Right lobe of liver (tissue), 6 donors: ENCODE measurements at regions of chr2 and their contacts with region 1.

Region 1: DNA sequence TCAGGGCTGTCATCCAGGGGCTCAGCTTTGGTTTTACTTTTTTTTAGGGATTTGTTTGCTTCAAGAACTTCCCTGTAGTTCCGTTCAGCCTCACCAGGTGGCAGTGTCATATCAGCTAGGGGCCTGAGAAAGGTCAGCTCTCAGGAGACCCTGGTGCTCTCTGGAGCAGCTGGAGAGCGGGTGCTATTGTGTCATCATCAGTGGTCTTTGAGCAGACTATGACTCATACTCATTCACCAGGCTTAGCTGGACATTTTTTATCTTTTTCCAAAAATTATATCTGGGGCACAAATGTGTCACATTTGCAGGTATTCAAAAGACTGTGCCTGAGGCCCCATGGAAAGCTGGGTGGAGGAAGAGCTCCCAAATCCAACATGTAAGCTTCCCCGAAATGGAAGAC is 24.4 kb downstream of the ZNF892 start:
- DNase-seq: peak; percentile 53 to 70 (median 60)
- ATAC-seq: peak; percentile 69 to 94 (median 86)
- H3K4me3 ChIP-seq: no peak overlapping the region
- H3K27ac ChIP-seq: no peak overlapping the region
- H3K4me1 ChIP-seq: no peaks in the 10 kb centered on the region
- H3K27me3 ChIP-seq: no peaks in the 10 kb centered on the region
- CTCF ChIP-seq: peak; percentile 78 to 88 (median 83)
- POLR2A ChIP-seq: no peak

Region 2: DNA sequence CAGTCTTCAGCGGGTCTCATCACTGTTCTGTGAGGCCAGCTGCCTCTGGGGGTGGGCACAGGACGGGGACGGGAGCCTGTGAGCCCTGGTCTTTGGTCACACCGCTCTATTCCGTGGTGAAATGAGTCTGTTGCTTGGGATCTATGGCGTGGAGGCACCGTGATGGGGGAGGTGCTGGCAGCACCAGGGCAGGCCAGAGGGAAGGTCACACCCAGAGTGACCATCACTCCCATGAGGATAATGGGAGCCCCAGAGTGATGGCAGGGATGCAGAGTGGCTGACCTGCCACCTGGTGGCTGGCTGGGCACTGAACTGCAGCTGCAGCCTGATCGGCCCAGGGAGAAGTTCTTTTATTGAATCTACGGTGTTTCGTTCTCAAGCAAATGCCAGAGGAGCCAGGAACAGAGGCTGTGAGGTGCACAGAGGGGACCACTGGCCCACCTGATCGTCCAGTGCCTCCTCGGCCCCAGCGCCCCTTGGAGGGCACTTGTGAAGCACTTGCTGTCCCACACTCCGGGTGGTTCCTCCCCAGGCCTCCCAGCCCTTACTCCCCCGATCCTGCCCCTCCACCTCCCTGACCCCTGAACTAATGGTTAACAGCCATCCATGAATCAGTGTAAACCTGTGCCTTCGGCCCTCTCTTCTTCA is 83.4 kb after region 1 on chr2:
- intact Hi-C with region 1: loop called (anchors 5 kb)
- DNase-seq: peak; percentile 59 to 69 (median 62)
- ATAC-seq: peak; percentile 83 to 94 (median 88)
- H3K4me3 ChIP-seq: no peak overlapping the region
- H3K27ac ChIP-seq: no peak overlapping the region
- H3K4me1 ChIP-seq: no peaks in the 10 kb centered on the region
- H3K27me3 ChIP-seq: no peaks in the 10 kb centered on the region
- CTCF ChIP-seq: peak; percentile 63 to 89 (median 85)
- POLR2A ChIP-seq: no peak

Region 3: DNA sequence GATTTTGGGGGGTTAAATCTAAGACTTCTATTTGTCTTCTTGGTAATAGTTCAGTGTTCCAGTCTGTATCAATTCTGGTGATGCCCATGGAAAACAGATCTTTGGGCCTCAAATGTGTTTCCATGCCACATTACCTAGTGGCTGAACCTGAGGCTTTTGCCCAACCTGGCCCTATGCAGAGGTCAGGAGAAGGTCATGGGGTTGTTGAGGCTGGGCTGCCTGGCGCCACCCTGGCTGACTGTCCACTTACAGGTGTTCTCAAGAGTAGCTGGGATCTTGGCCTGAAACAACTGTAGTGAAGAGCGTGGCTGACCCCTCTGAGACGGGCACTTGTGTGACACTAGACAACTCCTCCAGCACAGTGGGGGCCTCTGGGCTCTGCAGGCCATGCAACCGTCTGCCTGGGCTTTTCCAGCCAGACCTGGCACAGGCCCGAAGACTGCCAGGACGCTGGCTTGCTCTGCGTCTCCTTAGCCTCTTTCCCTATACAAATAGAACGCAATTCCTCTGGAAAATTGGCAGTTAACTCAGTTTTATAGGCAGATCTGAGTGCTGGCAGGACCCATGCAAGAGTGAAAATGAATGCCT is 487.8 kb after region 1 on chr2:
- intact Hi-C with region 1: no loop called
- DNase-seq: no peak
- ATAC-seq: peak in 2 of 4 donors; percentile 25 to 39
- H3K4me3 ChIP-seq: no peak overlapping the region
- H3K27ac ChIP-seq: no peak overlapping the region
- H3K4me1 ChIP-seq: no peaks in the 10 kb centered on the region
- H3K27me3 ChIP-seq: no peaks in the 10 kb centered on the region
- CTCF ChIP-seq: no peak
- POLR2A ChIP-seq: no peak